Activated CD4-positive, alpha-beta T cell treated with anti-CD3 and anti-CD28 coated beads for 36 hours (primary cell): ENCODE measurements at regions of chr9 and their contacts with region 1.

Region 1: GRCh38 chr9:87080512-87081264 is 133.4 kb upstream of the GAS1 start:
- DNase-seq: peak; percentile 7
- ATAC-seq: no peak
- H3K4me3 Mint-ChIP-seq: no peak overlapping the region
- H3K27ac Mint-ChIP-seq: no peak overlapping the region
- H3K4me1 Mint-ChIP-seq: no peaks in the 10 kb centered on the region
- H3K27me3 Mint-ChIP-seq: no peaks in the 10 kb centered on the region

Region 2: GRCh38 chr9:86470326-86470725 is 610.4 kb before region 1 on chr9:
- CTCF ChIA-PET with region 1: no interaction called
- POLR2A ChIA-PET with region 1: no interaction called
- intact Hi-C with region 1: no loop called
- DNase-seq: no peak
- ATAC-seq: no peak
- H3K4me3 Mint-ChIP-seq: no peak overlapping the region
- H3K27ac Mint-ChIP-seq: no peak overlapping the region
- H3K4me1 Mint-ChIP-seq: no peaks in the 10 kb centered on the region
- H3K27me3 Mint-ChIP-seq: peaks cover 17% of the 10 kb centered on the region

Region 3: GRCh38 chr9:87007711-87008366 is 72.8 kb before region 1 on chr9:
- CTCF ChIA-PET with region 1: no interaction called
- POLR2A ChIA-PET with region 1: no interaction called
- intact Hi-C with region 1: no loop called
- DNase-seq: no peak
- ATAC-seq: no peak
- H3K4me3 Mint-ChIP-seq: no peak overlapping the region
- H3K27ac Mint-ChIP-seq: no peak overlapping the region
- H3K4me1 Mint-ChIP-seq: no peaks in the 10 kb centered on the region
- H3K27me3 Mint-ChIP-seq: peaks cover 11% of the 10 kb centered on the region

Region 4: GRCh38 chr9:87020169-87020950 is 60.3 kb before region 1 on chr9:
- CTCF ChIA-PET with region 1: no interaction called
- POLR2A ChIA-PET with region 1: interaction called, 10 read pairs
- intact Hi-C with region 1: no loop called
- DNase-seq: no peak
- ATAC-seq: no peak
- H3K4me3 Mint-ChIP-seq: no peak overlapping the region
- H3K27ac Mint-ChIP-seq: no peak overlapping the region
- H3K4me1 Mint-ChIP-seq: no peaks in the 10 kb centered on the region
- H3K27me3 Mint-ChIP-seq: peaks cover 17% of the 10 kb centered on the region